Endothelial cell of umbilical vein (primary cell): ENCODE measurements at regions of chr9 and their contacts with region 1.

Region 1: GRCh38 chr9:134443168-134444037 is 117.1 kb downstream of the RXRA start:
- DNase-seq: peak; percentile 70
- H3K4me3 ChIP-seq: no peak overlapping the region
- H3K27ac ChIP-seq: no peak overlapping the region
- H3K4me1 ChIP-seq: peaks cover 6% of the 10 kb centered on the region
- H3K27me3 ChIP-seq: peaks cover 0 to 4% of the 10 kb centered on the region in 2 experiments
- CTCF ChIP-seq: peak; percentile 98 to 99
- POLR2A ChIP-seq: no peak

Region 2: DNA sequence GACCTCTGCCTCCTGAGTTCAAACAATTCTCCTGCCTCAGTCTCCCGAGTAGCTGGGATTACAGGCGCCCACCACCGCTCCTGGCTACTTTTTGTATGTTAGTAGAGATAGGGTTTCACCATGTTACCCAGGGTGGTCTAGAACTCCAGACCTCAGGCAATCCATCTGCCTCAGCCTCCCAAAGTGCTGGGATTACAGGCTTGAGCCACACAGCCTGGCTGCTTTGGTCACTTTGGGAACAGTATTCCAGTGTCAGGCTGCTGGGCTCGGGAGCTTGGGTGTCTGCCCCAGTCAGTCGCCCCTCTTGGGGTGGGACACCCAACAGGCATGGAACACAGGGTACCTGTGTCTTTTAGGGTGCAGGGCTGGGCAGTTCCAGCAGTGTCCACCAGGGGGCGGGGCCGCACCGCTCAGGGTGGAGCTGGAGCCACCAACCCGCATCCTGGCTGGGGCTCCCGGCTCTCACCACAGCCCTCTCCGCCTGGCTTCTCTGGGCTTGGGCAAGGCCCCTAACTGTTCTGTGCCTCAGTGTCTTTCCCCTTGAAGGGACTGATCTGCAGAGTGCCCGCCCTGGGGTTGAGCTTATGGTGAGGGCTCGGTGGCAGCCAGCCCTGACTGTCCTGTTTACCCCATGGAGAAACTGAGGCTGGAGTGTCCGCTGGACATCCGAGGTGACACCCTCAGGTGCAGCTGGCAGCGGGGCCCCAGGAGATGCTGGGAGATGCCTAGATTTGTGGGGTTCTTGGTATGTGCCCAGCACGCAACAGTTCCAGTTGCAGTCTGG is 272.7 kb before region 1 on chr9:
- CTCF ChIA-PET with region 1: interaction called, 133 read pairs
- POLR2A ChIA-PET with region 1: interaction called, 5 read pairs
- dilution Hi-C with region 1: no loop called
- intact Hi-C with region 1: loop called (anchors 1 kb)
- DNase-seq: no peak
- H3K4me3 ChIP-seq: no peak overlapping the region
- H3K27ac ChIP-seq: no peak overlapping the region
- H3K4me1 ChIP-seq: no peaks in the 10 kb centered on the region
- H3K27me3 ChIP-seq: no peaks in the 10 kb centered on the region
- CTCF ChIP-seq: no peak
- POLR2A ChIP-seq: no peak

Region 3: DNA sequence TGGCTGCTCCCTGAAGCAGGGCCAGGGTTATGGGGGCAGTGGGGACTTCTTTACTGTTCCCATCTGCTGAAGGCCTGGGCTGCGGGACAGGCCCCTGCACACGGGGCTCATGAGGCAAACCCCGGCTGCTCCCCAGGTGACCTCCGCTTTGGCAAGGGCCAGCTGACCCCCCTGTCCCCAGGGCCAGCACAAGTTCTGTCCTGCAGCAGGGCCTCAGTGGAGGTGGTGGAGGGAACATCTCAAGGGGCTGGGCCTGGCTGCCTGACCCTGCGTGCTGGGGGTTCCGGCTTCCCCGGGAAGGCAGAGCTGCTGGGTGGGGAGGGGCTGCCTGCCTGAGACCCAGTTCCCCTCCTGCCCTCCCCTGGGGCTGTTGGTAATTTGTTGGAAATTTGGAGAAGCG is 211.6 kb before region 1 on chr9:
- CTCF ChIA-PET with region 1: no interaction called
- POLR2A ChIA-PET with region 1: no interaction called
- dilution Hi-C with region 1: no loop called
- intact Hi-C with region 1: loop called (anchors 1 kb)
- DNase-seq: no peak
- H3K4me3 ChIP-seq: no peak overlapping the region
- H3K27ac ChIP-seq: no peak overlapping the region
- H3K4me1 ChIP-seq: no peaks in the 10 kb centered on the region
- H3K27me3 ChIP-seq: no peaks in the 10 kb centered on the region
- CTCF ChIP-seq: no peak
- POLR2A ChIP-seq: no peak

Region 4: GRCh38 chr9:134365791-134366688 is 77.4 kb before region 1 on chr9:
- CTCF ChIA-PET with region 1: interaction called, 9 read pairs
- POLR2A ChIA-PET with region 1: no interaction called
- dilution Hi-C with region 1: no loop called
- intact Hi-C with region 1: loop called (anchors 1 kb)
- DNase-seq: peak; percentile 77
- H3K4me3 ChIP-seq: no peak overlapping the region
- H3K27ac ChIP-seq: no peak overlapping the region
- H3K4me1 ChIP-seq: peaks cover 11% of the 10 kb centered on the region
- H3K27me3 ChIP-seq: no peaks in the 10 kb centered on the region
- CTCF ChIP-seq: no peak
- POLR2A ChIP-seq: no peak

Region 5: GRCh38 chr9:134407123-134407808 is 36.1 kb before region 1 on chr9:
- CTCF ChIA-PET with region 1: interaction called, 10 read pairs
- POLR2A ChIA-PET with region 1: no interaction called
- dilution Hi-C with region 1: no loop called
- intact Hi-C with region 1: loop called (anchors 2 kb)
- DNase-seq: peak; percentile 94
- H3K4me3 ChIP-seq: no peak overlapping the region
- H3K27ac ChIP-seq: peak overlapping the region; percentile 94
- H3K4me1 ChIP-seq: peaks cover 47% of the 10 kb centered on the region
- H3K27me3 ChIP-seq: no peaks in the 10 kb centered on the region
- CTCF ChIP-seq: no peak
- POLR2A ChIP-seq: no peak

Region 6: GRCh38 chr9:134422301-134423090 is 20.9 kb before region 1 on chr9:
- CTCF ChIA-PET with region 1: no interaction called
- POLR2A ChIA-PET with region 1: no interaction called
- dilution Hi-C with region 1: no loop called
- intact Hi-C with region 1: no loop called
- DNase-seq: no peak
- H3K4me3 ChIP-seq: no peak overlapping the region
- H3K27ac ChIP-seq: no peak overlapping the region
- H3K4me1 ChIP-seq: no peaks in the 10 kb centered on the region
- H3K27me3 ChIP-seq: no peaks in the 10 kb centered on the region
- CTCF ChIP-seq: no peak
- POLR2A ChIP-seq: no peak

Region 7: GRCh38 chr9:134811673-134812342 is 368.4 kb after region 1 on chr9:
- CTCF ChIA-PET with region 1: no interaction called
- POLR2A ChIA-PET with region 1: no interaction called
- dilution Hi-C with region 1: no loop called
- intact Hi-C with region 1: no loop called
- DNase-seq: no peak
- H3K4me3 ChIP-seq: no peak overlapping the region
- H3K27ac ChIP-seq: no peak overlapping the region
- H3K4me1 ChIP-seq: no peaks in the 10 kb centered on the region
- H3K27me3 ChIP-seq: no peaks in the 10 kb centered on the region
- CTCF ChIP-seq: no peak
- POLR2A ChIP-seq: no peak